ENCODE measurements at regions of chr20 and their contacts with region 1.

Region 1: GRCh38 chr20:25407311-25408169 is at the start of gene GINS1:
- DNase-seq: peak; percentile 92
- H3K4me3 Mint-ChIP-seq: peak within 1 kb of the TSS; percentile 92
- H3K27ac Mint-ChIP-seq: peak within 1 kb of the TSS; percentile 91
- H3K4me1 Mint-ChIP-seq: peaks cover 17% of the 10 kb centered on the region
- H3K27me3 Mint-ChIP-seq: no peaks in the 10 kb centered on the region
- total RNA-seq, gene GINS1: 25.5 to 27.7 TPM

Region 2: GRCh38 chr20:24034820-24035219 is 1372.7 kb before region 1 on chr20:
- CTCF ChIA-PET with region 1: no interaction called
- intact Hi-C with region 1: loop called (anchors 10 kb)
- DNase-seq: no peak
- H3K4me3 Mint-ChIP-seq: no peak overlapping the region
- H3K27ac Mint-ChIP-seq: no peak overlapping the region
- H3K4me1 Mint-ChIP-seq: peaks cover 19% of the 10 kb centered on the region
- H3K27me3 Mint-ChIP-seq: no peaks in the 10 kb centered on the region

Region 3: GRCh38 chr20:25057234-25058050 is 350.1 kb before region 1 on chr20:
- CTCF ChIA-PET with region 1: no interaction called
- intact Hi-C with region 1: loop called (anchors 5 kb)
- DNase-seq: peak; percentile 88
- H3K4me3 Mint-ChIP-seq: peak overlapping the region; percentile 71
- H3K27ac Mint-ChIP-seq: peak overlapping the region; percentile 72
- H3K4me1 Mint-ChIP-seq: peaks cover 45% of the 10 kb centered on the region
- H3K27me3 Mint-ChIP-seq: no peaks in the 10 kb centered on the region

Region 4: GRCh38 chr20:25310268-25310920 is 97.1 kb before region 1 on chr20:
- CTCF ChIA-PET with region 1: interaction called, 3 read pairs
- intact Hi-C with region 1: loop called (anchors 2 kb)
- DNase-seq: peak; percentile 81
- H3K4me3 Mint-ChIP-seq: peak overlapping the region; percentile 56
- H3K27ac Mint-ChIP-seq: peak overlapping the region; percentile 76
- H3K4me1 Mint-ChIP-seq: peaks cover 31% of the 10 kb centered on the region
- H3K27me3 Mint-ChIP-seq: no peaks in the 10 kb centered on the region

Region 5: GRCh38 chr20:25623736-25624499 is 216.4 kb after region 1 on chr20 and contains the start of gene NANP:
- CTCF ChIA-PET with region 1: no interaction called
- intact Hi-C with region 1: loop called (anchors 1 kb)
- DNase-seq: peak; percentile 96
- H3K4me3 Mint-ChIP-seq: peak within 1 kb of the TSS; percentile 91
- H3K27ac Mint-ChIP-seq: peak within 1 kb of the TSS; percentile 95
- H3K4me1 Mint-ChIP-seq: peaks cover 18% of the 10 kb centered on the region
- H3K27me3 Mint-ChIP-seq: no peaks in the 10 kb centered on the region
- total RNA-seq, gene NANP: 6.4 to 6.9 TPM